ENCODE measurements at regions of chr22 and their contacts with region 1.

Region 1: GRCh38 chr22:45268958-45269844 is 15.5 kb upstream of the UPK3A start:
- DNase-seq: peak in 9 of 10 donors; percentile 64 to 91 (median 77)
- H3K4me3 ChIP-seq: peak overlapping the region; percentile 26 to 80 (median 69)
- H3K27ac ChIP-seq: peak overlapping the region in 29 of 59 donors; percentile 2 to 75 (median 39)
- H3K27me3 ChIP-seq: no peaks in the 10 kb centered on the region
- CTCF ChIP-seq: peak; percentile 66 to 99 (median 90)

Region 2: GRCh38 chr22:45309472-45310227 is 40.4 kb after region 1 on chr22 and contains the start of gene FAM118A:
- intact Hi-C with region 1: loop called in 1 of 2 experiments (anchors 2 kb)
- DNase-seq: peak; percentile 87 to 98 (median 94)
- H3K4me3 ChIP-seq: peak within 1 kb of the TSS; percentile 62 to 100 (median 92)
- H3K27ac ChIP-seq: peak within 1 kb of the TSS in 57 of 59 donors; percentile 2 to 93 (median 84)
- H3K27me3 ChIP-seq: no peaks in the 10 kb centered on the region
- CTCF ChIP-seq: peak in 40 of 56 donors; percentile 5 to 57 (median 26)
- total RNA-seq, gene FAM118A: 13.8 to 116 (median 36.6) TPM

Region 3: GRCh38 chr22:45435544-45436139 is 166.4 kb after region 1 on chr22:
- intact Hi-C with region 1: loop called (anchors 1 to 2 kb)
- DNase-seq: peak; percentile 75 to 88 (median 82)
- H3K4me3 ChIP-seq: peak overlapping the region in 11 of 59 donors; percentile 10 to 35 (median 19)
- H3K27ac ChIP-seq: peak overlapping the region in 19 of 59 donors; percentile 7 to 71 (median 36)
- H3K27me3 ChIP-seq: no peaks in the 10 kb centered on the region
- CTCF ChIP-seq: peak; percentile 90 to 99 (median 98)

Region 4: GRCh38 chr22:45553351-45554039 is 284.3 kb after region 1 on chr22:
- intact Hi-C with region 1: loop called (anchors 2 to 5 kb)
- DNase-seq: peak; percentile 65 to 85 (median 73)
- H3K4me3 ChIP-seq: peak overlapping the region in 4 of 59 donors; percentile 2 to 16 (median 6)
- H3K27ac ChIP-seq: peak overlapping the region in 39 of 59 donors; percentile 6 to 84 (median 61)
- H3K27me3 ChIP-seq: peaks cover 0 to 5% (median 0%) of the 10 kb centered on the region in 45 donors
- CTCF ChIP-seq: peak; percentile 69 to 97 (median 92)

Measured in dorsolateral prefrontal cortex (tissue), 120 donors.